Activated T-helper 2 cell treated with anti-CD3 and anti-CD28 coated beads, Interferon-gamma antibody, Interleukin-2, Interleukin-4, amounts not matched to agents 10 μg/mL and 5 μg/mL and 100 μg/mL, durations not matched to agents 14 hours and 24 hours and 36 hours (primary cell): ENCODE measurements at regions of chr14 and their contacts with region 1.

Region 1: GRCh38 chr14:94136575-94137331 is 7.3 kb upstream of the IFI27L2 start:
- DNase-seq: peak; percentile 75
- H3K4me3 Mint-ChIP-seq: no peak overlapping the region
- H3K27ac Mint-ChIP-seq: no peak overlapping the region
- H3K4me1 Mint-ChIP-seq: peaks cover 6% of the 10 kb centered on the region
- H3K27me3 Mint-ChIP-seq: peaks cover 31% of the 10 kb centered on the region

Region 2: GRCh38 chr14:92686900-92687444 is 1449.8 kb before region 1 on chr14:
- intact Hi-C with region 1: no loop called
- DNase-seq: peak; percentile 58
- H3K4me3 Mint-ChIP-seq: no peak overlapping the region
- H3K27ac Mint-ChIP-seq: no peak overlapping the region
- H3K4me1 Mint-ChIP-seq: no peaks in the 10 kb centered on the region
- H3K27me3 Mint-ChIP-seq: no peaks in the 10 kb centered on the region

Region 3: GRCh38 chr14:94180655-94181271 is 44.0 kb after region 1 on chr14:
- intact Hi-C with region 1: loop called (anchors 1 kb)
- DNase-seq: no peak
- H3K4me3 Mint-ChIP-seq: peak overlapping the region; percentile 40
- H3K27ac Mint-ChIP-seq: peak overlapping the region; percentile 9
- H3K4me1 Mint-ChIP-seq: peaks cover 14% of the 10 kb centered on the region
- H3K27me3 Mint-ChIP-seq: peaks cover 28% of the 10 kb centered on the region